Calu3 (cell line): ENCODE measurements at regions of chr12 and their contacts with region 1.

Region 1: GRCh38 chr12:123983822-123984485 is 10.9 kb downstream of the ZNF664 start:
- DNase-seq: peak; percentile 46
- H3K4me3 Mint-ChIP-seq: no peak overlapping the region
- H3K27ac Mint-ChIP-seq: no peak overlapping the region
- H3K4me1 Mint-ChIP-seq: peaks cover 27% of the 10 kb centered on the region
- H3K27me3 Mint-ChIP-seq: no peaks in the 10 kb centered on the region
- CTCF ChIP-seq: peak; percentile 41

Region 2: DNA sequence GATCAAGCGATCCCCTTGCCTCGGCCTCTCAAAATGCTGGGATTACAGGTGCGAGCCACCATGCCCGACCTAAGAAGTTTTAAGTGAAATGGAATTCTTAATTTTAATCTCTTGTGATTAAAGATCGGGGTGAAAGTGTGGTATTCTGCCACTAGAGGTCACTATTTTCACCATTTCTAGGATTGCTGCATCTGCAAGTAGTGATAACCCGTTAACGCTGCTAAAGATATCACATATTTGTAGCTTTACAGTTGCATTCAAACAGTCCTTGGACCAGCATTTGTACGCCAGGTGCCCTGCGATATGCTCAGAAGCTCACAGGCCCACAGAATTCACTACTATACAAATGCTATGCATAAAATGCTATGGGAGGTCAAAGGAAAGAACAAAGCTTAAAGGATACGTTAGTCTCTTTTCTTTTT is 1190.3 kb before region 1 on chr12:
- CTCF ChIA-PET with region 1: no interaction called
- intact Hi-C with region 1: no loop called
- DNase-seq: peak; percentile 18
- H3K4me3 Mint-ChIP-seq: no peak overlapping the region
- H3K27ac Mint-ChIP-seq: no peak overlapping the region
- H3K4me1 Mint-ChIP-seq: peaks cover 3% of the 10 kb centered on the region
- H3K27me3 Mint-ChIP-seq: no peaks in the 10 kb centered on the region
- CTCF ChIP-seq: peak; percentile 59

Region 3: GRCh38 chr12:123801573-123802178 is 182.3 kb before region 1 on chr12:
- CTCF ChIA-PET with region 1: no interaction called
- intact Hi-C with region 1: loop called (anchors 1 kb)
- DNase-seq: no peak
- H3K4me3 Mint-ChIP-seq: no peak overlapping the region
- H3K27ac Mint-ChIP-seq: no peak overlapping the region
- H3K4me1 Mint-ChIP-seq: no peaks in the 10 kb centered on the region
- H3K27me3 Mint-ChIP-seq: peaks cover 46% of the 10 kb centered on the region
- CTCF ChIP-seq: peak; percentile 42